OCI-LY7 (cell line): ENCODE measurements at regions of chr2 and their contacts with region 1.

Region 1: GRCh38 chr2:10448208-10448645 is at the start of gene ODC1:
- DNase-seq: peak; percentile 94
- H3K4me3 ChIP-seq: peak within 1 kb of the TSS; percentile 88
- H3K27ac ChIP-seq: peak within 1 kb of the TSS; percentile 85
- H3K4me1 ChIP-seq: peaks cover 26% of the 10 kb centered on the region
- CTCF ChIP-seq: no peak
- total RNA-seq, gene ODC1: 273 and 306 TPM in 2 replicates

Region 2: GRCh38 chr2:9951272-9951972 is 496.8 kb before region 1 on chr2 and contains the start of gene GRHL1:
- CTCF ChIA-PET with region 1: no interaction called
- POLR2A ChIA-PET with region 1: no interaction called
- intact Hi-C with region 1: loop called (anchors 10 kb)
- DNase-seq: peak; percentile 93
- H3K4me3 ChIP-seq: peak within 1 kb of the TSS; percentile 77
- H3K27ac ChIP-seq: no peak within 1 kb of the TSS
- H3K4me1 ChIP-seq: peaks cover 12% of the 10 kb centered on the region
- CTCF ChIP-seq: no peak
- total RNA-seq, gene GRHL1: 0.19 and 2.4 TPM in 2 replicates

Region 3: DNA sequence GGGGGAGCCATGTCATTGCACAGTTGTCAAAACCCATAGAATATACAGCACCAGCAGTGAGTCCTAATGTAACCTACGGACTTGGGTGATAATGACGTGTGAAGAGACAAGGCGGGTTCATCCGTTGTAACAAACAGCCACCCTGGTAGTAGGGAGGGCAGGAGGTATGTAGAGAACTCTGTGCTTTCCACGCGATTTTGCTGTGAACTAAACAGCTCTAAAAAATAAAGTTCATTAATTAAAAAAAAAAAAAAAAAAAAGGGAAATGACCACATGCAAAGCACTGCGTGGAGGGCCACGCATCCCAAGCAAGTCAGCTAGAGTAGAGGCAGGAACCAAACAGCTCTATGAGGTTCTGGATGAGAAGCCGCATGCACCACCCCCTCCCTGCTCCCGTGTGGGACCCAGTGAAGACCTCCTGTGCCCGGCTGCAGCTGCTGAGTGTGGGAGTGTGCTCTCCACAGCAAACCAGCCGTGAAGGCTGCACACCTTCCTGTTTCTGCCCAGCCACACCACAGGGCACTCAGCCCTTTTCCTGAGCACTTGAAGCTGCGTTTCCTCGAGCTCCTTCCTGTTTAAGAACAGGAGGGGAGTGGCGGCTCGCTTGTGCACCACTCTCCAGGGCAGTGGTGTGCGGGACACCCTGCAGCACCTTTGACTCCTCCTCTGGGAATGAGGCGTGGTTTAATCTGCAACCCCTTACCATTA is 65.7 kb before region 1 on chr2:
- CTCF ChIA-PET with region 1: no interaction called
- POLR2A ChIA-PET with region 1: interaction called, 3 read pairs
- intact Hi-C with region 1: loop called (anchors 5 kb)
- DNase-seq: peak; percentile 85
- H3K4me3 ChIP-seq: peak overlapping the region; percentile 50
- H3K27ac ChIP-seq: peak overlapping the region; percentile 25
- H3K4me1 ChIP-seq: peaks cover 69% of the 10 kb centered on the region
- CTCF ChIP-seq: no peak

Region 4: DNA sequence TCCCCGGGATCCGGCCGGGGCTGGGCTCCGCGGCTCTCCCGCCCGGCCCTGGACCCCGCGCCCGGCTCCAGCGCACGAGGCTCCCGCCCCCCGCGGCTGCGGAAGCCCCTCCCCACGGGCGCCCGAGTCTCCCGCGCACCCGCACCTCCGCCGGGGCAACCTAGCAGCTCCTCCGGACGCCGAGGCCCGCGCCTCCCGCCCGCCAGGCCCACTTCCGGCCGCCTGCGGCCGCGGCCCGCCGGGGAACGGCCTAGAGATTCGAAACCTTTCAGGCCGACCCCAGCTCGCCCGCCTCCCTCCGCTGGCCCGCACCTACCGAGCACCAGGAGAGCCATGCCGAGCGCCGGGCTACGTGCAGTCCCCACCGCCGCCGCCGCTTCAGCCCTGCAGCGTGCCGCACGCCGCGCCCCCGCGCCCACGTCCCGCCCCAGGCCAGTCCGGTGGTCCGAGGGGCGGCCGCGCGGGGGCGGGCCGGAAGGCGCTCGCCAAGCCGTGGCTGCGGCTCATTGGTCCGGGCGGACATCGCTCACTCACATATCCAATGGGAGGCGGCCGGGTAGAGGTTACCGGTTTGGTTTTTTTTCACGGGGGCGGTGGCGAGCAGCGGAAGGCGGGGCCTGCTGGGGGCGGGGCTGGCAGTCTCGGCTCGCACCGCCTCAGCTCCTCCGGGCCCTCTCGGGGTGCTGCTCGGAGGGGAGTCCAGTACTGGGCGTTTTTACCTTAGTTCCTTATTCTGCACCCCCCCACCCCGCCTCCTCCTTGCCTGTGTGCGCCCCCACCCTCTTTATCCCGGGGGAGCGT is 364.3 kb after region 1 on chr2 and contains the start of gene PDIA6:
- CTCF ChIA-PET with region 1: no interaction called
- POLR2A ChIA-PET with region 1: no interaction called
- intact Hi-C with region 1: loop called (anchors 5 kb)
- DNase-seq: peak; percentile 97
- H3K4me3 ChIP-seq: peak within 1 kb of the TSS; percentile 79
- H3K27ac ChIP-seq: peak within 1 kb of the TSS; percentile 70
- H3K4me1 ChIP-seq: peaks cover 46% of the 10 kb centered on the region
- CTCF ChIP-seq: no peak
- total RNA-seq, gene PDIA6: 171 and 192 TPM in 2 replicates